Right lobe of liver (tissue), 6 donors: ENCODE measurements at regions of chr19 and their contacts with region 1.

Region 1: DNA sequence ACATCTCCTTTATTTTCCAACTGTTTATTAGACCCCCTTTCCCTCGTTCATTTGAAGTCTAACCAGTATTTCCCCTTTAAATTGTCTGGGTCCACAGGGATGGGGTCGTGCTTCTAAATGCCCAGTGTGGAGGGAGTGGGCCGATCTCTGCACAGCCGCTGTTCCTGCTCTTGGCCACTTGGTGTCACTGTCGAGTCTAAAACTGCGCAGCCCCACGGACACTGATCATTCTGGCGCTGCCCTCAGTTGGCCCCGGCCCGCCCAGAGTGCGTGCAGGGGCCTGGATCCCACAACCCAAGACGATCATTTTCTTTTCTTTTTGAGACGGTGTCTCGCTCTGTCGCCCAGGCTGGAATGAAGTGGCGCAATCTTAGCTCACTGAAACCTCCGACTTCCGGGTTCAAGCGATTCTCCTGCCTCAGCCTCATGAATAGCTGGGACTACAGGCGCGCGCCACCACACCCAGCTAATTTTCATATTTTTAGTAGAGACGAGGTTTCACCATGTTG is 12.0 kb downstream of the WDR88 start:
- DNase-seq: peak; percentile 51 to 67 (median 67)
- ATAC-seq: peak; percentile 96 to 99 (median 98)
- H3K4me3 ChIP-seq: no peak overlapping the region
- H3K27ac ChIP-seq: no peak overlapping the region
- H3K4me1 ChIP-seq: no peaks in the 10 kb centered on the region
- H3K27me3 ChIP-seq: no peaks in the 10 kb centered on the region
- CTCF ChIP-seq: peak; percentile 92 to 95 (median 94)
- POLR2A ChIP-seq: no peak

Region 2: DNA sequence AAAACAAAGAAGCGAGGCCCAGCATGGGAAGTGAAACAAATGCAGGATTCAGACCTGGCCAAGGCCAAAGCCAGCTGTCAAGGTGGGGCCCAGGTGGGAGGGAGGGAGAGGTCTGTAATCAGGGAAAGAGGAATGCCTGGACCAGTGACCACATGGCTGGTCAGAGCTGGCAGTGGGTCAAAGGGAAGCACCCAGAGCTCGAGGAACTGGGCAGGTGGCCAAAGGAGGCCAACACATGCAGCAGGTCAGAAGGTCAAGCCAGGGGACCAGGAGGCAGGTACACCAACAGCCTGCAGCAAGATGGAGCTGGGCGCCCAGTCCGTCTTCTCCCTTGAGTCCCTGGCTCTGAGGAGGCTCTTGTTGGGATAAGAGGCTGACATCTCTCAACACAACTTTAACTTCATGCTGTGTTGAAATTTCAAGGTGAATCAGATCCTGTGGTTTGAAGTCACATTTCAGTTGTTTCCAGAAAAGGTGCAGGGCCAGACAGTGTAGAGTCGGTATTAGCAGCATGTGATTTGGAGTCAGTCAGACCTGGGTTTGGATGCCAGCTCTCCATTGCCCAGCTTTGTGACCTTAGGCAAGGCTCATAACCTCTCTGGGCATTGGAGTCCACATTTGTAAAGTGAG is 45.8 kb before region 1 on chr19:
- intact Hi-C with region 1: no loop called
- DNase-seq: peak; percentile 65 to 83 (median 80)
- ATAC-seq: peak; percentile 65 to 83 (median 69)
- H3K4me3 ChIP-seq: no peak overlapping the region
- H3K27ac ChIP-seq: no peak overlapping the region
- H3K4me1 ChIP-seq: no peaks in the 10 kb centered on the region
- H3K27me3 ChIP-seq: no peaks in the 10 kb centered on the region
- CTCF ChIP-seq: no peak
- POLR2A ChIP-seq: no peak

Region 3: GRCh38 chr19:33176670-33177416 is 32.9 kb after region 1 on chr19:
- intact Hi-C with region 1: loop called (anchors 5 kb)
- DNase-seq: peak; percentile 97 to 99 (median 98)
- ATAC-seq: peak; percentile 92 to 96 (median 93)
- H3K4me3 ChIP-seq: peak overlapping the region; percentile 56 to 94 (median 90)
- H3K27ac ChIP-seq: peak overlapping the region; percentile 88 to 91 (median 89)
- H3K4me1 ChIP-seq: peaks cover 0 to 18% (median 4%) of the 10 kb centered on the region in 4 donors
- H3K27me3 ChIP-seq: no peaks in the 10 kb centered on the region
- CTCF ChIP-seq: peak in 3 of 4 donors; percentile 17 to 31 (median 18)
- POLR2A ChIP-seq: peak; percentile 84